Endothelial cell of umbilical vein (primary cell): ENCODE measurements at regions of chr1 and their contacts with region 1.

Region 1: DNA sequence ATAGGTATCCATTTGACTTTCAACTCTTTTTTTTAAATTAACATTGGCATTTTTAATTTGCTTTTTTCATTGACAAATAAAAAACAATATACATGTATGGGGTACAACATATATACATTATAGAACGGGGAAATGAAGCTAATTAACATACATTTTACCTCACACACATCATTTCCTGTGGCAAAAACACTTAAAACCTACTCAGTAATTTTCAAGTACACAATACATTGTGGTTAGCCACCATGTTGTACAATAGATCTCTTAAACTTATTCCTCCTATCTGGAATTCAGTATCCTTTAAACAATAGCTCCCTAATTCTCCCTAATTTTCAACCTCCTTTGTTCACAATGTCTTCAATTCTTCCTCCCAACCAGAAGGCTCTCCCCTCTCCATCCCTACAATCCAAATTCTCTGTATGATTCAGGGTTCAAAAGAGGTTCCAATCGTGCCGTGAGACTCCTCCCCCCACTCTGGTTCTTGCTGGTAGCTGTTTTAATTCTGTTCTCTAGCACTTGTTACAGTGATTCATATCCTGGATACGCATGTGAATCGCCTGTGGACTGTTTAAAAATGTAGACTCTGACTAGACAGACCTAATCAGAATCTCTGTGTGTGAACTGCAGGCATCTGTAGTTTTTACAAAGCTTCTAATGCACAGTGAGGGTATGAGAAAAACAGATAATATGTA is 87.6 kb upstream of the DUSP10 start:
- DNase-seq: peak; percentile 93
- H3K4me3 ChIP-seq: no peak overlapping the region
- H3K27ac ChIP-seq: peak overlapping the region; percentile 63
- H3K4me1 ChIP-seq: peaks cover 58% of the 10 kb centered on the region
- H3K27me3 ChIP-seq: no peaks in the 10 kb centered on the region
- CTCF ChIP-seq: no peak
- POLR2A ChIP-seq: no peak

Region 2: DNA sequence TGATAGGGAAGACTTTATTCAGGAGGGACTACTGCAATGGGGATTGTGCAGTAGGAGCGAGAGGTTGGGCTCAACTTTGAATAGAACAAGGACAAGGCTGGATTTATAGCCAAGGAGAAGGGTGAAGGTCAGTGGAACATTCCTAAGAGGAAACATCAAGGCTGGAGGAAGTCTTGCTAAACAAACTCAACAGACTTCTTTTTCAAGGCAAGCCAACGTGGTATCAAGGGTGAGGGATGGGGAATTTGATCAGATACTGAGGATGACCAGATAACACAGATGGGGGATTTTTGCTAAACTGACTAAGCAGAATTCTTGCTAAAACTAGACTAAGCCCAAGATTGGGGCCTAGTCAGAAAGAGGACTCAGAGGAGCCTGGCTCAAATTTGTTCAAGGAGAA is 194.9 kb before region 1 on chr1:
- CTCF ChIA-PET with region 1: no interaction called
- POLR2A ChIA-PET with region 1: no interaction called
- dilution Hi-C with region 1: no loop called
- intact Hi-C with region 1: no loop called
- DNase-seq: no peak
- H3K4me3 ChIP-seq: no peak overlapping the region
- H3K27ac ChIP-seq: no peak overlapping the region
- H3K4me1 ChIP-seq: no peaks in the 10 kb centered on the region
- H3K27me3 ChIP-seq: no peaks in the 10 kb centered on the region
- CTCF ChIP-seq: no peak
- POLR2A ChIP-seq: no peak

Region 3: GRCh38 chr1:221761354-221762002 is 68.0 kb before region 1 on chr1:
- CTCF ChIA-PET with region 1: interaction called, 4 read pairs
- POLR2A ChIA-PET with region 1: no interaction called
- dilution Hi-C with region 1: no loop called
- intact Hi-C with region 1: loop called (anchors 1 kb)
- DNase-seq: no peak
- H3K4me3 ChIP-seq: no peak overlapping the region
- H3K27ac ChIP-seq: peak overlapping the region; percentile 52
- H3K4me1 ChIP-seq: peaks cover 60% of the 10 kb centered on the region
- H3K27me3 ChIP-seq: no peaks in the 10 kb centered on the region
- CTCF ChIP-seq: no peak
- POLR2A ChIP-seq: no peak

Region 4: GRCh38 chr1:221809031-221810029 is 20.1 kb before region 1 on chr1:
- CTCF ChIA-PET with region 1: interaction called, 3 read pairs
- POLR2A ChIA-PET with region 1: no interaction called
- dilution Hi-C with region 1: no loop called
- intact Hi-C with region 1: loop called (anchors 2 kb)
- DNase-seq: peak; percentile 53
- H3K4me3 ChIP-seq: no peak overlapping the region
- H3K27ac ChIP-seq: peak overlapping the region; percentile 22
- H3K4me1 ChIP-seq: peaks cover 23% of the 10 kb centered on the region
- H3K27me3 ChIP-seq: no peaks in the 10 kb centered on the region
- CTCF ChIP-seq: no peak
- POLR2A ChIP-seq: no peak

Region 5: DNA sequence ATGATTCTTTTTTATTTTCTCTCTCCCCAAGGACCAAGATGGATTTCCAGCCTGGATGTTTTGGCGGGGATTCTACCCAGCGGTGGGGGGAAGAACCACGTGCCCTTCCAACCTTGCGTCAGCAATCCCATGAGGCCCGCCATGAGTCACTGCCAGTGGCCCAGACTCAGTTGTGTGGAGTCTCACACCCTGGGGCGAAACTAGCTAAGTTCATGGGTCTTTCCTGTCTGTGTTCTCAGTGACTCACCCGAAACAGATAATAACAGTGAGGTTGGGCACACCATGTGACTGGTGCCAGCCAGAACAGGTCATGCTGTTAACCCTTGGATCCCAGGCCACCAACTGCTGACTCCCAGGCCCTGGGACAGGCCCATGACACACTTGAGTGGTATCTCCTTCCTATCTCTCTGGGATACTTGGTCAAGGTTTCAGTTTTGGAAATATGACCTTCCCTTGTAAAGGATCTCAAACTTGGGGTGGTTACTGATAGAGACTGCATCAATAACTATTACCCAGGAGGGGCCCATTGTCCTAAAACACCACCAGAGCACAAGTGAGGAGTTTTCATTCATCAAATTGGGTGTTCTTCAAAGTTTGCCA is 10.4 kb after region 1 on chr1:
- CTCF ChIA-PET with region 1: interaction called, 3 read pairs
- POLR2A ChIA-PET with region 1: no interaction called
- dilution Hi-C with region 1: no loop called
- intact Hi-C with region 1: loop called (anchors 1 kb)
- DNase-seq: peak; percentile 45
- H3K4me3 ChIP-seq: no peak overlapping the region
- H3K27ac ChIP-seq: peak overlapping the region; percentile 4
- H3K4me1 ChIP-seq: peaks cover 16% of the 10 kb centered on the region
- H3K27me3 ChIP-seq: no peaks in the 10 kb centered on the region
- CTCF ChIP-seq: no peak
- POLR2A ChIP-seq: no peak

Region 6: GRCh38 chr1:221868593-221869303 is 39.3 kb after region 1 on chr1:
- CTCF ChIA-PET with region 1: interaction called, 4 read pairs
- POLR2A ChIA-PET with region 1: no interaction called
- dilution Hi-C with region 1: no loop called
- intact Hi-C with region 1: loop called (anchors 2 kb)
- DNase-seq: peak; percentile 79
- H3K4me3 ChIP-seq: no peak overlapping the region
- H3K27ac ChIP-seq: peak overlapping the region; percentile 16
- H3K4me1 ChIP-seq: peaks cover 13% of the 10 kb centered on the region
- H3K27me3 ChIP-seq: peaks cover 0 to 2% of the 10 kb centered on the region in 2 experiments
- CTCF ChIP-seq: no peak
- POLR2A ChIP-seq: no peak

Region 7: GRCh38 chr1:221881805-221882581 is 52.5 kb after region 1 on chr1:
- CTCF ChIA-PET with region 1: no interaction called
- POLR2A ChIA-PET with region 1: no interaction called
- dilution Hi-C with region 1: no loop called
- intact Hi-C with region 1: no loop called
- DNase-seq: no peak
- H3K4me3 ChIP-seq: no peak overlapping the region
- H3K27ac ChIP-seq: no peak overlapping the region
- H3K4me1 ChIP-seq: no peaks in the 10 kb centered on the region
- H3K27me3 ChIP-seq: no peaks in the 10 kb centered on the region
- CTCF ChIP-seq: no peak
- POLR2A ChIP-seq: no peak